Posterior vena cava (tissue), 2 donors: ENCODE measurements at regions of chr3 and their contacts with region 1.

Region 1: DNA sequence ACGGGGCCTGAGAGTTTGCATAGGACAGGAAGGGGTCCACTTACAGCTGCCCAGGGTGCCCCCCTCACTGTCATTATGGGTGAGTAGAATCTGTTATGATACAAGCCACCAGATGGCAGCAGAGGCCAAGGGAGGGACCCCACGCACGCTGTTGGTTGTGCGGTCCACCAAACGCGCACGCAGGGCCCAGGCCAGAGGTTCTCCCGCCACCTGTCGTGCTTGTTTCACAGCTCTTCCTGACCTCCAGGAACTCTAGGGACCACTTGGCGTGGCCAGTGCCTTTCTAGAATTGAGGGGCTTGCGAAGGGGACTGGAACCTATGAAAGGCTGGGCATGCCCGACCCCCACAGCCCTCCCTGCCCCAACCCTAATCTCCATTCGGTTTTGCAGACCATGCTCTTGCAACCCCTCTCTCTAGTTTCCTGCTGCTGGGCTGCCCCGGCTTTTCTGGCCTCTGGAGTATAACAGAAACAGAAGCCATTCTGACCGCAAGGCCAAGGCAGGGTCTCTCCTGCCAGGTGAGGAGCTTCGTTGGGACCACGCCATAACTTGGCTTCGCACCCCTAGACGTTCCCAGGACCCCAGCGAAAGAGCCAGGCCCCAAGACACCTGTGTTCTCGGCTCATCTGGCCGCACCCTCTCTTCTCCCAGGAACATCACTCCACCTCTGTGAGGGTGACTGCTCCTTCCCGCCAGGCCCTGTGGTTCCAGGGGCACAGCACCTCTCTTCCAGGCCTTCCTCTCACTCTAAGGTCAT is 46.0 kb downstream of the ALDH1L1 start:
- DNase-seq: peak; percentile 88

Region 2: DNA sequence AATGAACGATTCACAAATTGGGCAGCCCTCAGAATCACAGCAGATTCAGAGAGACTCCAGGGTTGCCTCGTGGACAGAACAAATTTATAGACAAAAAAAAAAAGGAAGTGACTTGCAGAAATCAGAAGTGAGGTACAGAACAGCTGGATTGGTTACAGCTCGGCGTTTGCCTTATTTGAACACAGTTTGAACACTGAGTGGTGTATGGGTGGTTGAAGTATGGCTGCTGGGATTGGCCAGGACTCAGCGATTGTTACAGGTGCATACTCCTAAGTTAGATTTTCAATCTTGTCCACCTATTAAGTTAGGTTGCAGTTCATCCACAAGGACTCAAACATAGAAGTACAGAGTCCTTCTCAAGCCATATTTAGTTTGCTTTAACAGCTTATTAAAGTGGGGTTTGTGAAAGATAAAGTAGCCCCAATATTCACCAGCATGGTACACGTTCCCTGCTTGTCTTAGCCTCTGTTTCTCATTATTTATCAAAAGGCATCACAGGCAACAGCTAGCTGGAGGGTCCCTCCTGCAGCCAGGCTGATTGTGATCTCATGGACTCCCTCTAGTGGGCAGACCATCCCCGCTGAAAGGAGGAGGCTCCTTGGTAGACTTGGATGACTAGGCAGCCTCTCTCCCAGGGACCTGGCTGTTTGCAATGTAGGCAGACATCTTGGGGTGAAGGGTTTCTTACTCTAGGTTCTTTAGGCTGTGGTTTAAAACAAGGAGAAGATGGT is 63.6 kb after region 1 on chr3:
- intact Hi-C with region 1: loop called in 1 of 2 experiments (anchors 5 kb)
- DNase-seq: no peak